ENCODE measurements at regions of chr14 and their contacts with region 1.

Region 1: DNA sequence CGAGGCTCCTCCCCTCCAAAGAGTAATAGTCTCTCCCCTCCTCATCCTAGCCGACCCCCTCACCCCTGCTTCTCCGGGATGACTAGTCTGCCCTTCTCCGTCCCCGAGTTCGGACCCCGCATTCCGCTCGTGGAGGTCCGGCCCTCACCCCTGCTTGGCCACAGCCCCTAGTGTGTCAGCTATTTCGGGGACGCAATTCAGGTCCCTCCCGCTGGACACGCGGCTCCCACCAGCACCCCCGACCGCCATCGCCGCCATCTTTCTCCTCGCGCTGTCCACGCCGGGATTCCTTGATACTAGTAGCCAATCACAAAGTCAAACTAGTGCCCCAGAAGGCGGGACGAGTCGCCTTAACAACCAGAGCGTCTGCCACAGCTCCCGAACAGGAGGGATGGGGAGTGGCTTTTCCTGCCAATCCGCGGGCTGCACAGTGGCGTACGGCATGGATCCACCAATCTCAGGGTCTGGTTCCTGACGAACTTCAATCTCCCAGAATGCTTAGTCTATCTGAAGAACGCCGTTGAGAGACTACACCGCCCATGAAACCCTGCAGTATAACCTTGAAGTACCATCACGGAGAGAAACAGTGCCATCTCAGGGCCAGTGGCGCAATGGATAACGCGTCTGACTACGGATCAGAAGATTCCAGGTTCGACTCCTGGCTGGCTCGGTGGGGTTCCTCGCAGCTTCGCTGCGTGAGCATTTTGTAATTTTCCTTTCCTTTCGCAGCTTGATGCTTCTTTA is at the start of gene PRMT5:
- DNase-seq: peak; percentile 98
- ATAC-seq: peak; percentile 97
- H3K4me3 Mint-ChIP-seq: no peak within 1 kb of the TSS
- H3K27ac Mint-ChIP-seq: no peak within 1 kb of the TSS
- H3K4me1 Mint-ChIP-seq: peaks cover 32% of the 10 kb centered on the region
- H3K27me3 Mint-ChIP-seq: no peaks in the 10 kb centered on the region
- total RNA-seq, gene PRMT5: 49.2 to 84.0 TPM

Region 2: DNA sequence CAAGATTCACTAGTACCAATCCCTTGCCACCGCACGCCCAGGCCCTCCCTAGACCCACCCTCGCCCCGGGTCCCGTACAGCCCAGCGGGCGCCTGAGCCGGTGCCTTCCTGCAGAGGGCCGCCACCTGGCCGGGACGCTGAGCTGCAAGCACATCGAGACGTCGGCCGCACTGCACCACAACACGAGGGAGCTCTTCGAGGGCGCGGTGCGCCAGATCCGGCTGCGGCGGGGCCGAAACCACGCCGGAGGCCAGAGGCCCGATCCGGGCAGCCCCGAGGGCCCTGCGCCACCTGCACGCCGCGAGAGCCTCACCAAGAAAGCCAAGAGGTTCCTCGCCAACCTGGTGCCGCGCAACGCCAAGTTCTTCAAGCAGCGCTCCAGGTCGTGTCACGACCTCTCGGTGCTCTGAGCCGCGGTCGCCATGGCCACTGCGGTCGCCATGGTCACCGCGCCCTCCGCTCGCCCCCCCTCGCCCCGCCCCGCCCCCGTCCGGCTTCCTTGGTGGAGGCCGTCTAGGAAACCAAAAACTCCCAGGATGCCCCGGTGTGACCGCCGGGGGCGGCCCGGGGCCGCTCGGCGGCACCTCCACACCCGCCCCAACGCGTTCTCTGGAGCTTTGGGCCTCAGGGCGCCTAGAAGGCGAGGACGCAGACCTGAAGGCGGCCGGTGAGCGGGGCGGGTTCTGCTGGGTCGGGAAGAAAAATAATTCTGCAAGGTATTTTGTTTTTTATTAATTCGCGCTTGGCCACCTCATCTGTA is 42.6 kb before region 1 on chr14:
- CTCF ChIA-PET with region 1: interaction called, 17 read pairs
- DNase-seq: peak; percentile 83
- ATAC-seq: peak; percentile 84
- H3K4me3 Mint-ChIP-seq: peak overlapping the region; percentile 77
- H3K27ac Mint-ChIP-seq: peak overlapping the region; percentile 80
- H3K4me1 Mint-ChIP-seq: peaks cover 36% of the 10 kb centered on the region
- H3K27me3 Mint-ChIP-seq: peaks cover 37% of the 10 kb centered on the region

Region 3: GRCh38 chr14:22939684-22940083 is 10.4 kb after region 1 on chr14:
- CTCF ChIA-PET with region 1: interaction called, 16 read pairs
- DNase-seq: no peak
- ATAC-seq: no peak
- H3K4me3 Mint-ChIP-seq: no peak overlapping the region
- H3K27ac Mint-ChIP-seq: no peak overlapping the region
- H3K4me1 Mint-ChIP-seq: no peaks in the 10 kb centered on the region
- H3K27me3 Mint-ChIP-seq: no peaks in the 10 kb centered on the region

Region 4: GRCh38 chr14:22973217-22974032 is 44.1 kb after region 1 on chr14:
- CTCF ChIA-PET with region 1: interaction called, 15 read pairs
- DNase-seq: peak; percentile 52
- ATAC-seq: peak; percentile 51
- H3K4me3 Mint-ChIP-seq: no peak overlapping the region
- H3K27ac Mint-ChIP-seq: no peak overlapping the region
- H3K4me1 Mint-ChIP-seq: no peaks in the 10 kb centered on the region
- H3K27me3 Mint-ChIP-seq: peaks cover 14% of the 10 kb centered on the region

Region 5: DNA sequence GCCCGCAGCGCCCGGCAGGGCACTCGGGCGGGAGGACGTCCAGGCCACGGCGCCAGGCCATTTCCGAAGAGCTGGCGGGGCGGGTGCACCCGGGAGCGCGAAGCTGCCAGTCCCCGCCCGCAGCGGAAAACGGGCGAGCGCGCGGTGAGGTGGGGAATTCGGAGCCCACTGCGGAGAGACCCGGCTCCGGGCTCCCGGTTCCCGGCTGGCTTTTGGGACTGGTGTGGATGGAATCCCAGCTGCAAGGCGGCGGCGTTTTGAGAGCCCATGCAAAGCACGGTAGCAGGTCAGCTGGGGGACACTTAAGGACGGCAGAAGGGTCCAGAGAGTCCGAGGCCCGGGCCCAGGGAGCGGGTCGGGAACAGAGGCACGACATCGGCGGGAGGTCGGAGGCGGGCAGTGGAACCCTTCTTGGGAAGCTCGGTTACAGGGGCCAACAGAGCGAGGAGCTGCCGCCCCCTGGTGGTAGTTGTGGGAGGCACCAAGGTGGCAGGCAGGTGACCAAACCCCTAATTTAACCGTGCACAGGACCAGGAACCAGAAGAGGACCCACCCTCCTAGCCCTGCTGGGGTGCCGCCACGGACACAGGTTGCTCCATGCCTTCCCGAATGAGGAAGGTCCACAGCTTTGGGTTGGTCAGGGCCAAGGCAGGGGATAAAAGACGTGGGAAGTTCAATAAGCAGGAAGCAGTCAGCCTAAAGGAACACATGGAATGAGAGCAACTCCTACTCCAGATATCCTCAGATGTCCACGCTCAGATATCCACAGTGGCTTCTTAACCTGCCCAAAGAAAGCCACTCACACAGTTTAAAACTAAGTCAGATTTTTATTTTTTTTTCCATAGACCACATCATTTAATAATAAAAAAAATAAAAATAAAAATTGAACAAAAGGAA is 128.7 kb after region 1 on chr14:
- CTCF ChIA-PET with region 1: interaction called, 12 read pairs
- DNase-seq: peak; percentile 92
- ATAC-seq: peak; percentile 77
- H3K4me3 Mint-ChIP-seq: peak overlapping the region; percentile 77
- H3K27ac Mint-ChIP-seq: no peak overlapping the region
- H3K4me1 Mint-ChIP-seq: peaks cover 16% of the 10 kb centered on the region
- H3K27me3 Mint-ChIP-seq: peaks cover 8% of the 10 kb centered on the region

Region 6: DNA sequence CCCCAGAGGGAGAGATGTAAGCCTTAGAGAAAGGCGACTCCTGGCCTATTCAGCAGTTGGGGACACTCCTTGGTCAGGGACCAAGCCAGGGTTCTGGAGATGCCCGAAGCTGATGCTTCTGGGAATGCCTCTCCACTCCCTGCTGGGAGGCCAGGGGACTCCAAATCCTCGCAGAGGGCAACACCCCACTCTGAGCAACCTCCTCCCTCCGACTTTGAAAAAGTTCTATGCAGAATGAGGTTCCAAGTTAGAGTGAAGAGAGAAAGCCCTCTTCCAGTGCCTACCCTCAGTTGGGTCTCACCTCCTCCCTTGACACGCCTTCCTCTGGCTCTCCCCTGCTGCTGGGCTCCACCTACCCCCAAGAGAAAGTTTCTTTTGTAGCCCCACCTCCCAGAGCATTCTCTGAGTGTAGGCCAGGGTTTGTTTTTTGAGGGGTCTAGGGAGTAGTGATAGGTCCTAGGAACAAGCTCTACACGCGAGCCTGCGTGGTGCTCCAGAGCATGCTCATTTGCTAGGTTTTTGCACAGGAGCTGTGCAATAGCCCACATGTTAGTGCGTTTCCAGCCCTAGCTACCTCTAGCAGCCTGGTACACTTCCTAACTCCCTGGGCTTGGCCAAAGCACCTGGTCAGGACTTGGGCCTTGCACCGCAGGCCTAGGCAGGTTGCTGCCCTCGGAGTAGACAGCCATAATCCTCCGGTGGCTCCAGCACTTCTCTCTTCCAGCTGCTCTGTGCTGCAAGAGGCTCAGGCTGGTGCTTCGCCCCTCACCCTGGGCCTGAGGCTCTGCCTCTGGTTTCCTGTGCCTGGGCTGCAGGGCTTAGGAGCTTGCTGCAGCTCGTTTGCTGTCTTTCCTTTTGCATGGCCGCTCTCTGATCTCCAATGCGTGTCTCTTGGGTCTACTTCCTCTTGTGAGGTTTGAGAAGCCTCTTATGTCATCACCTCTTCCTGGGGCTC is 190.4 kb after region 1 on chr14:
- CTCF ChIA-PET with region 1: no interaction called
- DNase-seq: peak; percentile 66
- ATAC-seq: peak; percentile 52
- H3K4me3 Mint-ChIP-seq: peak overlapping the region; percentile 33
- H3K27ac Mint-ChIP-seq: peak overlapping the region; percentile 91
- H3K4me1 Mint-ChIP-seq: peaks cover 42% of the 10 kb centered on the region
- H3K27me3 Mint-ChIP-seq: no peaks in the 10 kb centered on the region

Measured in activated CD8-positive, alpha-beta memory T cell treated with anti-CD3 and anti-CD28 coated beads, Interleukin-2, amount 10 ng/mL, durations not matched to agents 7 days and 5 days (primary cell).